IMR-90 (cell line): ENCODE measurements at regions of chr14 and their contacts with region 1.

Region 1: DNA sequence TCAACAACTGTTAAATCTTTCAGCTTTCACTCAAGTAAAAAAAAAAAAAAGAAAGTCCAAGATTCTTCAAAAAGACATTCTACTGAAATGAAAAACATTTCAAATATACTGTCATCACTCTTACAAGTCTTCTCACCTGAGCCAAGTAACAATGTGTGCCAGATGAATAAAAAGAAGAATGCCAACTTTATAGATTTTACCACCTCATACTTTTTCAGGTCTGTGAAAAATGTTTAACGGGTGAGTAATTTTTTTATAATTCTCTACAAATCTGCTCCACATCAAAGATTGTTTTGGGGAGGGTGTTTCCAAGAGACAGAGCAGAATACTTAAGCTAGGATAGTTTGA is 181.0 kb upstream of the BMP4 start:
- DNase-seq: no peak
- ATAC-seq: no peak
- H3K4me3 ChIP-seq: no peak overlapping the region
- H3K27ac ChIP-seq: no peak overlapping the region
- H3K4me1 ChIP-seq: peaks cover 2% of the 10 kb centered on the region; the same call in 1 of the 2 replicates
- H3K27me3 ChIP-seq: no peaks in the 10 kb centered on the region; the same call in 1 of the 2 replicates
- CTCF ChIP-seq: no peak
- POLR2A ChIP-seq: no peak
- RAD21 ChIP-seq: no peak

Region 2: GRCh38 chr14:53766106-53766505 is 371.5 kb before region 1 on chr14:
- CTCF ChIA-PET with region 1: no interaction called
- POLR2A ChIA-PET with region 1: interaction called, 12 read pairs
- dilution Hi-C with region 1: no loop called
- in situ Hi-C with region 1: no loop called
- intact Hi-C with region 1: no loop called
- DNase-seq: no peak
- ATAC-seq: no peak
- H3K4me3 ChIP-seq: no peak overlapping the region
- H3K27ac ChIP-seq: no peak overlapping the region
- H3K4me1 ChIP-seq: no peaks in the 10 kb centered on the region
- H3K27me3 ChIP-seq: peaks cover 11% of the 10 kb centered on the region
- CTCF ChIP-seq: no peak
- POLR2A ChIP-seq: no peak
- RAD21 ChIP-seq: no peak

Region 3: GRCh38 chr14:54002653-54003052 is 134.9 kb before region 1 on chr14:
- CTCF ChIA-PET with region 1: no interaction called
- POLR2A ChIA-PET with region 1: no interaction called
- dilution Hi-C with region 1: no loop called
- in situ Hi-C with region 1: no loop called
- intact Hi-C with region 1: no loop called
- DNase-seq: peak; percentile 74
- ATAC-seq: peak; percentile 71
- H3K4me3 ChIP-seq: no peak overlapping the region
- H3K27ac ChIP-seq: 0 out of 2 replicates have a peak overlapping the region, but pooled peaks have one; percentile 5
- H3K4me1 ChIP-seq: peaks cover 19% of the 10 kb centered on the region
- H3K27me3 ChIP-seq: no peaks in the 10 kb centered on the region
- CTCF ChIP-seq: no peak
- POLR2A ChIP-seq: no peak
- RAD21 ChIP-seq: no peak

Region 4: DNA sequence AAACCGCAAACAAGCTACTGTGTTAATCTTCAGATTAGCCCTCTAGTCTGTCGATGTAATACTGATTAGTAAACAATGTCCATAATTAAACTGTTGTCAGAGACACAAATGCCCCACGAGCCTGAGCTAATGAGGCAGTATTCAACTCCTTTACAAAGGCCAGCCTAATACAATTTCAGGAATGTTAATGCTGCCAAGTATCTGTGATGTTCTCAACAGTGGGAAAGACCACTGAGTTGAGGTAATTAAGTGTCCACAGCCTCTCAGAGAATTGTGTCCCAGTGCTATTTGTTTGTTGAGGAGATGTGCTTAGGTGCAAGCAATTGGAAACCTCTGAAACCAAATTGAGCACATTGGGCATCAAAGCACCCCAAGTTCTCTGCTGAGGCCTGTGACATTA is 119.8 kb after region 1 on chr14:
- CTCF ChIA-PET with region 1: no interaction called
- POLR2A ChIA-PET with region 1: no interaction called
- dilution Hi-C with region 1: no loop called
- in situ Hi-C with region 1: no loop called
- intact Hi-C with region 1: no loop called
- DNase-seq: no peak
- ATAC-seq: no peak
- H3K4me3 ChIP-seq: no peak overlapping the region
- H3K27ac ChIP-seq: no peak overlapping the region
- H3K4me1 ChIP-seq: peaks cover 4% of the 10 kb centered on the region; the same call in 1 of the 2 replicates
- H3K27me3 ChIP-seq: peaks cover 6% of the 10 kb centered on the region
- CTCF ChIP-seq: no peak
- POLR2A ChIP-seq: no peak
- RAD21 ChIP-seq: no peak

Region 5: DNA sequence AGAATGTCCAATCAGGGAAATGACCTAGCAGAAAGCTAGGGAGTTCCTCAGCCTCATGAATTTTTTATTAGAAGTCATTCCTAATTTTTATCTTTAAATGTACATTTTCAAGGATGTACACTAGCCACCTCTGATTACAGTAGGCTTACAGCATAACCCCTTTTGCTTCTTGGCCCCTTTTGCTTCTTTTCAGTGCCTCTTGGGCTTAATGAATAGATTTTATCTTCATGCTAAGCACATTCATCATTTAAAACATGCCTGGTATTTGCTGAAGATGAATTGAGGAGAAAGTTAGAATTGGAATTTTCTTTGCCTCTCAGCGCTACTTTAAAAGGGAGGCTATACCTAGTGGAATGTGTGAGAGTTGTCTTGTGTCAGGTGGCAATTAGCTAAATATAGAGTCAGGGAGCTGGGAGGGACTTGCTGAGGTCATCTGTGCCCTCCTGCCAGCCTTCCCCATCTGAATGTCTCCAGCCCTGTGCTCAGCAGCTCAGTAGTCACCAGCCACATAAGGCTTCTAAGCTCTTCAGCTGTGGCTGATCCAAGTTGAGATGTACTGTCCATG is 561.5 kb after region 1 on chr14:
- CTCF ChIA-PET with region 1: no interaction called
- POLR2A ChIA-PET with region 1: no interaction called
- dilution Hi-C with region 1: no loop called
- in situ Hi-C with region 1: no loop called
- intact Hi-C with region 1: no loop called
- DNase-seq: no peak
- ATAC-seq: peak; percentile 28; the same call in 1 of the 2 replicates
- H3K4me3 ChIP-seq: no peak overlapping the region
- H3K27ac ChIP-seq: no peak overlapping the region
- H3K4me1 ChIP-seq: peaks cover 14% of the 10 kb centered on the region
- H3K27me3 ChIP-seq: no peaks in the 10 kb centered on the region
- CTCF ChIP-seq: no peak
- POLR2A ChIP-seq: no peak
- RAD21 ChIP-seq: no peak